BJ (cell line): ENCODE measurements at regions of chr20 and their contacts with region 1.

Region 1: DNA sequence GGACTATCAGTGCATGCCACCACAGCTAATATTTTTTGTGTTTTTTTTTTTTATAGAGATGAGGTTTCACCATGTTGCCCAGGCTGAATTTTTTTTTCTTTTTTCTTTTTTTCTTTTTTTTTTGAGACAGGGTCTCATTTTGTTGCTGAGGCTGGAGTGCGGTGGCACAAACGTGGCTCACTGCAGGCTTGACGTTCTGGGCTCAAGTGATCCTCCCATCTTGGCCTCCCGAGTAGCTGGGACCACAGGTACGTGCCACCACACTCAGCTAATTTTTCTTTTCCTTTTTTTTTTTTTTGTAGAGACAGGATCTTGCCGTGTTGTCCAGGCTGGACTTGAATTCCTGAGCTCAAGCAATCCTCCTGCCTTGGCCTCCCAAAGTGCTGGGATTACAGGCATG is 10.6 kb upstream of the AP5S1 start:
- DNase-seq: no peak
- H3K4me3 ChIP-seq: no peak overlapping the region
- H3K27me3 ChIP-seq: no peaks in the 10 kb centered on the region
- CTCF ChIP-seq: no peak

Region 2: GRCh38 chr20:3557237-3557785 is 252.5 kb before region 1 on chr20:
- CTCF ChIA-PET with region 1: no interaction called
- POLR2A ChIA-PET with region 1: no interaction called
- DNase-seq: no peak
- H3K4me3 ChIP-seq: no peak overlapping the region
- H3K27me3 ChIP-seq: no peaks in the 10 kb centered on the region
- CTCF ChIP-seq: no peak

Region 3: DNA sequence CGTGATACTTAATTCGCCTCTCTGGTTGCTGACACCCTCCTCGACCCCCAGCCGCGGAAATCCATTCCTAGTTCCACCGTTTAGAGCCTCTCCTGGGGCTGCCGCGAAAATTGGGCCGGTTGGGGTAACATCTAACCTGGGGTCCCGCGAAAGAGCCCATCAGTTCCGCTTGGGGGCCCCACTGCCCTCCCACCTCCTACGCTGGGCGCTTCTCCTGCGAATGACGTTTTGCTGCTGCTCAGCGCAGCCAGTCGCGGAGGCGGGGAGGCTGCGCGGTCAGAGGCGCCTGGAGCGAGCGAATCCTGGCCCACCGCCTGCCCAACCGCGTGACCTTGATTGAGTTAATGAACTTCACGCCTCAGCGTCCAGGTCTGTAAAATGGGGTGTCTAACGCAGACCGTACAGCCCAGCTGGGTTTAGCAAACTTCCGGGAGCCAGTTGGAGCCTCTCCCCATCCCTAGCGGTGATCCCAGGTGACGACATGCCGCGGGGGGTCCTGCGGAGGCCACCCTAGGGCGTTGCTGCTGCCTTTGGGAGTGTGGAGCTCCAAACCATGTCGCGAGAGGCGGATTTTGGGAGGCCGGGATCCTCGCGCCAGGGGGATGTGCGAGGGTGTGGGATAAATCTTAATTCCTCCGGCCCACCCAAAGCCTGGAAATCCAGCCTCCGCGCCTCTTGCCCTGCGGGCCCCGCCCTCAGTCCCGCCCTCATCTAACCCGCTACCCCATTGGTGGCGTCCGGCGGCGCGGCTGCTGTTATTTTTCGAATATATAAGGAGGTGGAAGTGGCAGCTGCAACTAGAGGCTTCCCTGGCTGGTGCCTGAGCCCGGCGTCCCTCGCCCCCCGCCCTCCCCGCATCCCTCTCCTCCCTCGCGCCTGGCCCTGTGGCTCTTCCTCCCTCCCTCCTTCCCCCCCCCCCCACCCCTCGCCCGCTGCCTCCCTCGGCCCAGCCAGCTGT is 14.0 kb before region 1 on chr20 and contains the start of gene CDC25B:
- CTCF ChIA-PET with region 1: interaction called, 248 read pairs
- POLR2A ChIA-PET with region 1: interaction called, 11 read pairs
- DNase-seq: peak; percentile 51
- H3K4me3 ChIP-seq: peak within 1 kb of the TSS; percentile 68
- H3K27me3 ChIP-seq: no peaks in the 10 kb centered on the region
- CTCF ChIP-seq: peak; percentile 47
- polyA plus RNA-seq, gene CDC25B: 41.8 and 68.1 TPM in 2 replicates